GM13976 (cell line): ENCODE measurements at regions of chr12 and their contacts with region 1.

Region 1: DNA sequence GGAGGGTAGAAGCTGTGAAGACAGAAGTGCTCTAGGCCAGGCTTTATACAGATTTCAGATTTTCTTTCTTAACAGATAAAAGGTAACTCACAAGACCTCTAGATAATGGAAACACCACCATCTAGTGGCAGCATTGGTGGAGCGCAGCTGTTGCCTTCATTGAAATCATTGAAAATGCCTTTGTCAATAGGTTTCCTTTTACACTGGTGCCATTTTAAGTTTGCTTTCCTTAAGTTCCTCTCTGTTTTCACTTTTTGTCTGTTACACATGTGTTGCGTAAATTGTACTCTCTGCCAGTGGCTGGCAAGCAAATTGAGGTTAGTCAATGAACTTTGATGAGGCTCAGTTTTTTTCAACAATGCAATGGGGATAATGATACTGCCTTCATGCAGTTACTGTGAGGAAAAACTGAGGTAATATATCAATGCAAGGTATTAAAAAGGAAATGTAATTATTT is 31.1 kb downstream of the ALDH1L2 start:
- DNase-seq: peak; percentile 52
- CTCF ChIP-seq: peak; percentile 88

Region 2: DNA sequence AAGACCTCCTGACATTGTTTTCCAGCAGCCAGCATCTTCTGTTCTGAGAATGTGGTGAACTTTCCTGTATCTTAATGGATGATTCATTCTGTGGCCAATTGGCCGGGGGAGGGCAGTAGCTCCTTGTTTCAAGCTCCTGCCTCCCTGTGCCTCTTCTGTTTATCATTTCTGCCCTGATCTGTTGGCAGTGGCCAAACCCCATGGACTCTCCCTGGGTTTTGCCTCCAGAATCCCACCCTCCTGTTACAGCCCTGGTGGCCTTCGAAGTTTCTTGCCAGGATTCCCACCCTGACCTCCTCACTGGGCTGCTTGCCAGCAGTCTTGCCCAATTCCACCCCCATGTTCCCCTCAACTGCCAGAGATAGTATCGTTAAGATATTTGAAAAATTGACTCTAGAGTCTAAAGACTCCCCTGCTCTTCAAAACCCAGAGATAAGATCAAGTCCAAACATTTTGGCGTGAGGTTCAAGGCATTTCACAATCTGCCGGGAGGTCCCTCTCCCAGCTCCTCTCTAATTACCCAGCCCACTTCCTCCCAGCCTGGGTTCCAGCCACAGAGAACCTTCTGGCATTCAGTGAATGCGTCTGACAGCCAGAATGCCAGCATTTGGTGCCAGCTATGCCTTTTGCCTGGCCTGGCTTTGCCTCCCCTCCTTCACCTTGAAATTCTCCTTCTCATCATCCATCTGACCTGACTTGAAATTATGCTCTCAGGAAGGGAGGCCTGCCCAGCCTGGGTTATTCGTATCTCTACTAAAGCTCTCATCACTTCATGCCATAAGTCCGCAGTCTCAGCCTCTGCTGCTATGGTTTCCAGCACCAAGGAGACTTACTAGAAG is 875.3 kb before region 1 on chr12:
- in situ Hi-C with region 1: loop called (anchors 25 kb)
- DNase-seq: no peak
- CTCF ChIP-seq: no peak

Region 3: DNA sequence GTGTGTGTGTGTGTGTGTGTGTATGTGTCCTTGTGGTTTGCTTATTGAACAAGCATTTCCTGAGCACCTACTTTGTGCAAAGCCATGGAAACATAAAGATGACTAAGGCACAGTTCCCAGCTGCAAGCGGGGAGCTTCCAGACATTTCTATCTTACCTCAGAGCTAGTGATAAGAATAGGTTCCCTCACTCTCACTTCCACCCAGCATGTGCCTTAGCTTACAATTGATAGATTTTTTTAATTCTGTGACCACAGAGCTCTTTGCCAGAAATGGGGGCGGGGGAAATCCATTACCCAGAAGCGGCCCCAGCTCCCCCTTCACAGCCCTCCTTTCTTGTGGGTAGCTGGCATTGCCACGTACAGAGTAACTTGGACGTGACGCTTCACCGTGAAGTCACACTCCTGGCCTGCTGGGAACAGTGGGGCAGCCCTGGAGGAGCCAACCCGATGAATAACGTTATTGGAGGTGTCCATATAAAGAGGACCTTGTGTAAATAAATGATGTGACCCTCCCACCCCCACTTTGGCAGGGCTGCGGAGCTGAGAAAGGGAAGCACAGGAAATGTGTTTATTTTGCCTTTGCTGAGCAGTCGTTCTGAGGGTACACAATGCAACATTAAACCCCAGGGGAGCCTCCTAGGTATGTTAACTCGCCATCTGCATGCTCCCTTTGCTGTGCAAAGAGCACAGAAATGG is 357.5 kb before region 1 on chr12:
- in situ Hi-C with region 1: loop called (anchors 25 kb)
- DNase-seq: peak; percentile 59
- CTCF ChIP-seq: no peak